Activated CD4-positive, alpha-beta memory T cell treated with anti-CD3 and anti-CD28 coated beads for 36 hours (primary cell): ENCODE measurements at regions of chr14 and their contacts with region 1.

Region 1: DNA sequence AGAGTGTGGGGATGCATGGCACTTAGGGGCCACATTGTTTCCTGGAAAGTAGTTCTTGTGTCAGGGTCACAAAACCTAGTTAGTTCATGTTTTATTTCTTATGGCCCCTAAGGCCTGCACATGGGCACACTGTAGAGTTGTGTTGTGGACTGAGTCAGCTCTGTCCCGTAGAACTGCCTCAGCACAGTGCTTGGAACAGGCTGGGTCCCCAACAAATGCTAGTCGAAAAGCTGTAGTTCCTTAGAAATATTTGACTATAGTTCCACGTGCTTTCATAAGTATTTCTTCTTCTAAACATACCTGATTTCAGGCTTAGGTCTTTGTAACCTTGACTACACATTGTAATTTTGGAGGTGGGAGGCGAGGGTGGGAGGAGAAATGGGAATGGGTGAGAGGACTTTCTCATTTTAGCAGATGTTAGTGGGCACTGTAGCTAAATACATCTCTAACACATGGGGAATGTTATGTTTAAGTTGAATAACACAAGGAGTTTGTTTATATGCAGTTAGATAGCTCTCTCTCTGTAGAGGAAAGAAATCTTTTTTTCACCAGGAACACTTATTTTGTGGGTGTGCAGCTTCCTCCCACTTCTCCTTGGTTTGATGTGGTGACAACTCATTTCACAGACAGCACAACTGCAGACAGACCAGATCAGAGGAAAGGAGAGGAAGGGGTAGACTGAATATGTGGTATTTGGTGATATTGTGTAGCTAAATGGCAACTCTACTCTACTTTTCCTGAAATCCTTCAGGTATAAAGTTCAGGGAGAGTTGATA is 39.5 kb upstream of the DACT1 start:
- DNase-seq: peak; percentile 16
- H3K4me3 Mint-ChIP-seq: no peak overlapping the region
- H3K27ac Mint-ChIP-seq: no peak overlapping the region
- H3K4me1 Mint-ChIP-seq: peaks cover 34% of the 10 kb centered on the region
- H3K27me3 Mint-ChIP-seq: peaks cover 4% of the 10 kb centered on the region

Region 2: DNA sequence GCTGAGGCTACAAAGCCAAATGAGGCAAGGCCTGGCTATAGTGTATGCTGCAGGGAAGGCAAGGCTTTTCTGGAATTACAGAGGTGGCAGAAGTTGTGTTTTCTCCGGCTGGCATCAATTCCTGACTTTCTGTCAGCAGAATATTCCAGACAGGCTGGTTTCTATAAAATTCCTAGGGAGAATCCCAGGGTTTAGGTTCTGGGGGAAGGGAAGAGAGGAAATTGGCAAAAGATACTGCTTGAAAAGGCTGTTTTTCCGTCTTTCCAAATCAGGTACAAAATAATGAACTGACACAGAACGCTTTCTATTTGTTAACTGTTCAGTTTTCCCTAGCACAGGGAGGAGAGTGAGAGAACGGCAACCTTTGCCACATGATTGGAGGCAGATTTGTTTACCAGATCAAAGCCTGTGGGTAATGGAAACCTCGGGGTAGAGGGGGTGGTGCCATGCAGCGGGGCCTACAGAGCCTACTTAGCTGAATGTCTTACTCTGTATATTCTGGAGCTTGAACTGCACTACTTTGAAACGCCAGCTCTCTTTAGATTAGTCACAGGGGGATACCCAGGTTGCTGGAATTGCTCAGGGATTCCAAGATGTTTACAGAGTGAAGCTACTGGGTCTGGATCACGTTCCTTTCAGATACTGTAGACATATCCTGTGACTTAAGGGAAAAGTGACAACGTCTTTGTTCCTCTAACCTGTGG is 26.3 kb before region 1 on chr14:
- CTCF ChIA-PET with region 1: no interaction called
- POLR2A ChIA-PET with region 1: no interaction called
- intact Hi-C with region 1: loop called (anchors 2 kb)
- DNase-seq: peak; percentile 77
- H3K4me3 Mint-ChIP-seq: peak overlapping the region; percentile 11
- H3K27ac Mint-ChIP-seq: peak overlapping the region; percentile 87
- H3K4me1 Mint-ChIP-seq: peaks cover 39% of the 10 kb centered on the region
- H3K27me3 Mint-ChIP-seq: no peaks in the 10 kb centered on the region

Region 3: DNA sequence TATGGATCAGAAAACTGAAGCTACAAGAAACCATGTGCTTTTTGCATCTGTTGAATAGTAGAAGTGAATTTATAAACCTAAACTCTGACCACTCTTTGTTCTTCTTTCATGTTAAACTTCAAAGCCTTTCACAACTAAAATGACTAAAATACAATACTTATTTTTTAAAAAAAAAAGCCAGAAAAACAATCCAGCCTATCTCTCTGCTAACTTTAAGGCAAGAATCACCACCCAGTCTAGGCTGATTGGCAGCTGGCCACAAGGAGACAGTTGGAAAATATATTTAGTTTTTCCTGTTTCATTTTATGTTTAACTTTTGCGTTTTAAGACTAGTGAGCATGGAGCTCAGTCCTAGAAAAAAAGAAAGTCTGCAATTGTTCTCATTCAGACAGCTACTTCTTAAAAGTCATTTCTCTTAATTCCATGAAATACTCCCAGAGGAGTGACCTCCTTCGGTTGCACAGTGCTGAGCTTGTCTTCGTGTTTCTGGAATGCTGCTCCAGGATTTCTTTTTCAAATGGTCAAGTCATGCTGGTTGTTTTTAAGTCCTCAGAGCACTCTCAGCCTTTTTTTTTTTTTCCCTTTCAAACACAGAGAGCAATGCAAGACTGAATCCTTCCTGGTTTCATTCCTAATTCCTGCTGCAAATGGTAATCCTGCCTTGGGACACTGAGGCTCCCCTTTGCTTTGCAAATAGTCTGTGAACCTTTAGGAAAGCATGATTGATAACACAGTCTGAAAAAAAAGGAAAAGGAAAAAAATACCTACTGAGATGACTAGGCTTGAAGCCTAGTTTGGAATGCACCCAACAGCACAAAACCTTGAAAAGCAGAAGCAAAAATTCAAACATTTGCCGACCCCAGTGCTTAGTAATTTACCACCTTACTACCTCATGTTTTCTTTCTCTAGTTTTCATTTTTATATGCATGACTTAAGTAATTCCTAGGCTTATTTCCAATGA is 357.0 kb after region 1 on chr14:
- CTCF ChIA-PET with region 1: no interaction called
- POLR2A ChIA-PET with region 1: no interaction called
- intact Hi-C with region 1: no loop called
- DNase-seq: no peak
- H3K4me3 Mint-ChIP-seq: no peak overlapping the region
- H3K27ac Mint-ChIP-seq: no peak overlapping the region
- H3K4me1 Mint-ChIP-seq: no peaks in the 10 kb centered on the region
- H3K27me3 Mint-ChIP-seq: peaks cover 10% of the 10 kb centered on the region